Posterior cingulate gyrus (tissue), 11 donors: ENCODE measurements at regions of chr11 and their contacts with region 1.

Region 1: DNA sequence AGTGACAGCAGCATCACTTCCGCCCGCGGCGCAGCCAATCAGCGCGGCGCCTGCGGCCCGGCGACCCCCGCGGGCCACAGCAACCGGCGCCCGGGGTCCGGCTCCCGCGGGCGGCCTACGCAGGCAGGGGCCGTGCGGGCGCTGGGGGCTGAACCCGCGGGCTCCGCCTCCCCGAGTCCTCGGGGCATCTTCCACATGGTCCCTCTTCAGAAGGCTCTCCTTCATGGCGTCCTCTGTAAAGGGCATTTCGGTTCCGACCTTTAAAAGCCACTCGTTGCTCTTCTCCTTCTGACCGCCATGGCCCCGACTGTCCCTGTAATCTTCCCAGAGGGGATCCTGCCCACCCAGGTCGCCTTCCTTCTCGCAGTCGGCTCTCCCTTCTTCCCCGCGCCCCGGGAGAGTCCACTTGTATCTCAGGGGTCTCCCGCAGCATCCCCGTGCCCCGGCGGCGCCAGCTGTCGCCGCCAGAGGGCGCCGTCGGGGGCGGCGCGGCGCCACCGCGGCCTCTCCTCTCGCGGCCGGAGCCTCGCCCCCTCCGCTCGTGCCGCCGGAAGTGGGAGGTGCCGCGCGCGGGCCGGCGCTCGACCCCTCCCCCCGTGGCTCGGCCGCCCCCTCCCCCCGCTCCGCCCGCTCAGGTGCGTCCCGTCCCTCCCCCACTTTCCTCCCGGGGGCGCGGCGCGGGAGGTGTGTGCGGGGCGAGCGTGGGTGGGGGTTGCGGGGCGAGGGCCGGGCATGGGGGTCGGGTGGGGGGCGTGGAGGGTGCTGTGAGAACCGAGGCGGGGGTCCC is at the start of gene RNF214:
- DNase-seq: peak; percentile 72 to 98 (median 83)

Region 2: GRCh38 chr11:116772443-116773202 is 459.7 kb before region 1 on chr11 and contains the start of gene BUD13:
- intact Hi-C with region 1: loop called (anchors 10 kb)
- DNase-seq: peak; percentile 86 to 98 (median 90)

Region 3: GRCh38 chr11:117178210-117179034 is 53.9 kb before region 1 on chr11 and contains the start of gene SIDT2:
- intact Hi-C with region 1: loop called (anchors 2 kb)
- DNase-seq: peak; percentile 91 to 99 (median 96)

Region 4: GRCh38 chr11:117316197-117316961 is 84.1 kb after region 1 on chr11 and contains the start of gene BACE1:
- intact Hi-C with region 1: loop called (anchors 1 kb)
- DNase-seq: peak; percentile 83 to 99 (median 92)